ENCODE measurements at regions of chr17 and their contacts with region 1.

Region 1: GRCh38 chr17:15157051-15157450 is 108.1 kb downstream of the PMP22 start:
- DNase-seq: no peak
- ATAC-seq: no peak

Region 2: DNA sequence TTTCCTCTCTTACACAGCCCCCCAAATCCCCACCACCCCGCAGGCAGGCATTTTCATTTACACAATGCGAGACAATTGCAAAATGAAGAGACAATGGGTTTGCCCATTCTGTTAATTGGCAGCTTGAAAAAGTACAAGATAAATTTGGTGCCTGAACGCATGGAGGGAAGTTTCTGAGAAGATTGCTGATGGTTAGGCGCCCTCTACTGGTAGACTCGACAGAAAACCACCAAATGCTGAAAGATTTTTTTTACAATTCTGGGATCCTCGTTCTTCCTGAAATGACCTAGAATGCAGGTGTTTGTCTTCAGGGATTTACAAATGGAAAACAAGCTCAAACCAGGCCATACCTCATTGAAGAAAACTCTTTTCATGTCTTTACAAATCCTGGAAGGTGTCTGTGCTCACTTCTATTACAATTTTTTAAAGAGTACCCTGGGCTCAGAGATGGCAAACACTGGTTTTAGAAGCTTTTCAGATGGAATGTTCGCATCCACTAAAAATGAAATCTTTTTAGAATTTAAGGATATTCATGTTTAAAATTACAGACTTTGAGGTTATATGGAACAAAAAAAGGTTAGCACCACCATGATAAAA is 230.4 kb before region 1 on chr17:
- intact Hi-C with region 1: loop called (anchors 10 kb)
- DNase-seq: peak; percentile 35
- ATAC-seq: no peak

Region 3: GRCh38 chr17:14935139-14935841 is 221.8 kb before region 1 on chr17:
- intact Hi-C with region 1: loop called in 1 of 2 experiments (anchors 10 kb)
- DNase-seq: no peak
- ATAC-seq: no peak

Measured in left cardiac atrium (tissue), 4 donors.